ENCODE measurements at regions of chr7 and their contacts with region 1.

Region 1: DNA sequence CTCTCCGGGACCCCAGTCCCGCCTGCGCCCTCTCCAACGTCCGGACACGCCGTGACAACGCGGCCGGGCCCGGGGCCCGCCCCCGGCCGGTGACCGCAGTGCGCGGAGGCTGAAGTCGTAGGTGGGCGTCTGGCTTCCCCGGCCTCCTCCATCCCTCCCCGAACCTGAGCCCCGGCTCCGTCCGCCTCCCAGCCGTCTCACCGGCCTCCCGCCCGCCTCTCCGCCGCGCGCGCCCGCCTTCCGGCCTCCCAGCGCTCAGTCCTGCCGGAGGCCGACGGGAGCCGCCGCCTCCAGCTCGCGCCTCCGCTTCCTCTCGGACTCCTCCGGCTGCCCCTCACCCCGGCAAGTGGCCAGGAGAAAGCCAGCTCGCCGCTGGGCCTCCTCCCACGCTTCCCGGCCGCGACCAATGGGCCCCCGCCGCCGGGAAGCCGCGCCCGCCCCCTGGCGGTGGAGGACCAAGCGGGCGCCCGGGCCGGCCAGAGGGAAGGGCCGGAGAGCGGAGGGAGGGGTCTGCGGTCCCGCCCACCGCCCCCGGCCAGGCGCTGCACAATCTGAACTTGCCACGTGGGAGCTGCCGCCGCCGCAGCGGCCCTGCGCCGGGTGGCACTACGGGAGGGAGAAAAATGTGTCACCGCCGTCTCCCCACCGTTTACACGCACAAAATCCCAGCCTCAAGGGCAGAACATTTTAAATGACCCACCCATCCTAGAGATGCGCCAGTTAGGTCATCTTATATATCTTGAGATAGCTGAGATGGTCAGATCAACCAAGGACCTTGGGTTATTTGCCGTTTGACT is at the start of gene FAM3C:
- DNase-seq: peak; percentile 92
- ATAC-seq: peak; percentile 89
- H3K4me3 Mint-ChIP-seq: peak within 1 kb of the TSS; percentile 88
- H3K27ac Mint-ChIP-seq: peak within 1 kb of the TSS; percentile 88
- H3K4me1 Mint-ChIP-seq: peaks cover 33% of the 10 kb centered on the region
- H3K27me3 Mint-ChIP-seq: no peaks in the 10 kb centered on the region
- total RNA-seq, gene FAM3C: 13.3 to 14.9 TPM

Region 2: GRCh38 chr7:121278120-121279021 is 117.8 kb before region 1 on chr7:
- CTCF ChIA-PET with region 1: no interaction called
- POLR2A ChIA-PET with region 1: no interaction called
- intact Hi-C with region 1: loop called in 1 of 2 experiments (anchors 5 kb)
- DNase-seq: no peak
- ATAC-seq: peak; percentile 92
- H3K4me3 Mint-ChIP-seq: no peak overlapping the region
- H3K27ac Mint-ChIP-seq: no peak overlapping the region
- H3K4me1 Mint-ChIP-seq: peaks cover 20% of the 10 kb centered on the region
- H3K27me3 Mint-ChIP-seq: peaks cover 33% of the 10 kb centered on the region

Region 3: DNA sequence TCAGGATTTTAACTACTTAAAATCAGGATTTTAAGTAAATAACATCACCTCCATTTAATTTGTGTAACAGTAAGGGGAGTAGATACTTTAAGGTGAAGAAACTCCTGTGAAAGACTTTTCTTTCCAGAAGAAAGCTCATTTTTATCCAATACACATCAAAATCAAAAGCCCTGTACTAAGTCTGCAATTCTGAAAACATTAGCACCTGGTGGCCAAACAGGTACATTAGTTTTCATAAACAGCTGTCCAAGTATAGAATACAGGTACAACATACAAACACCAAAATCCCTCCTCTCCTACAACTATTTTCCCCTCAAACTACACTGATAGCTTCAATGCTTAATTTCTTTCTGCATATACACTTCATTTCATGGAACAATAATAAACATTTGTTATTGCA is 23.0 kb before region 1 on chr7:
- CTCF ChIA-PET with region 1: interaction called, 31 read pairs
- POLR2A ChIA-PET with region 1: no interaction called
- intact Hi-C with region 1: no loop called
- DNase-seq: no peak
- ATAC-seq: no peak
- H3K4me3 Mint-ChIP-seq: no peak overlapping the region
- H3K27ac Mint-ChIP-seq: peak overlapping the region; percentile 45
- H3K4me1 Mint-ChIP-seq: peaks cover 20% of the 10 kb centered on the region
- H3K27me3 Mint-ChIP-seq: no peaks in the 10 kb centered on the region

Region 4: GRCh38 chr7:121385800-121386179 is 10.4 kb before region 1 on chr7:
- CTCF ChIA-PET with region 1: interaction called, 32 read pairs
- POLR2A ChIA-PET with region 1: interaction called, 5 read pairs
- intact Hi-C with region 1: loop called in 1 of 2 experiments (anchors 2 kb)
- DNase-seq: no peak
- ATAC-seq: peak; percentile 53
- H3K4me3 Mint-ChIP-seq: no peak overlapping the region
- H3K27ac Mint-ChIP-seq: no peak overlapping the region
- H3K4me1 Mint-ChIP-seq: peaks cover 67% of the 10 kb centered on the region
- H3K27me3 Mint-ChIP-seq: no peaks in the 10 kb centered on the region